ENCODE measurements at regions of chr1 and their contacts with region 1.

Region 1: GRCh38 chr1:185317034-185317885 is at the start of gene IVNS1ABP:
- DNase-seq: peak; percentile 90 to 99 (median 95)
- ATAC-seq: peak; percentile 74 to 81 (median 76)
- H3K4me3 ChIP-seq: peak within 1 kb of the TSS; percentile 95 to 99
- H3K4me3 Mint-ChIP-seq: peak within 1 kb of the TSS; percentile 95 to 96 (median 95)
- H3K27ac ChIP-seq: peak within 1 kb of the TSS; percentile 98
- H3K27ac Mint-ChIP-seq: peak within 1 kb of the TSS; percentile 98
- H3K4me1 ChIP-seq: peaks cover 8 to 28% of the 10 kb centered on the region in 2 experiments
- H3K4me1 Mint-ChIP-seq: peaks cover 48 to 55% (median 53%) of the 10 kb centered on the region in 3 donors
- H3K27me3 ChIP-seq: no peaks in the 10 kb centered on the region
- H3K27me3 Mint-ChIP-seq: no peaks in the 10 kb centered on the region
- total RNA-seq, gene IVNS1ABP: 125 to 292 (median 136) TPM

Region 2: DNA sequence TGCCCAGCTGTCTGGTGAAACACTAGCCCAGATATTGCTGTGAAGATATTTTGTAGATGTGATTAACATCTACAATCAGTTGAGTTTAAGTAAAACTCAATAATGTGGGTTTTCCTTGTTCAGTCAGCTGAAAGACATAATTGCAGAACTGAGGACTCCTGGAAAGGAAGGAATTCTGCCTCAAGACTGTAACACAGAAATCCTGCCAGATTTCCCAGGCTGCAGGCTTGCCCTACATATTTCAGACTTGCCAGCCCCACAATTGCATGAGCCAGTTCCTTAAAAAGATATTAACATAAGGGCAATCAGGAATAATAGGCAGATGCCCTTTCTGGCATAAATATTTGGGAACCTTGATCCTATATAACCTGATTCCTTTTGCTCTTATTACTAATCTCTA is 328.8 kb before region 1 on chr1:
- CTCF ChIA-PET with region 1: no interaction called
- POLR2A ChIA-PET with region 1: no interaction called
- DNase-seq: no peak
- ATAC-seq: no peak
- H3K4me3 ChIP-seq: no peak overlapping the region
- H3K4me3 Mint-ChIP-seq: no peak overlapping the region
- H3K27ac ChIP-seq: no peak overlapping the region
- H3K27ac Mint-ChIP-seq: no peak overlapping the region
- H3K4me1 ChIP-seq: no peaks in the 10 kb centered on the region
- H3K4me1 Mint-ChIP-seq: no peaks in the 10 kb centered on the region
- H3K27me3 ChIP-seq: no peaks in the 10 kb centered on the region
- H3K27me3 Mint-ChIP-seq: peaks cover 2 to 24% of the 10 kb centered on the region in 2 donors

Region 3: GRCh38 chr1:185238447-185238846 is 78.8 kb before region 1 on chr1:
- CTCF ChIA-PET with region 1: interaction called, 4 to 15 read pairs
- POLR2A ChIA-PET with region 1: interaction called, 3 to 8 read pairs
- DNase-seq: peak in 1 of 35 experiments; percentile 50
- ATAC-seq: peak in 3 of 4 experiments; percentile 42 to 71 (median 69)
- H3K4me3 ChIP-seq: no peak overlapping the region
- H3K4me3 Mint-ChIP-seq: peak overlapping the region in 2 of 3 donors; percentile 31 to 35
- H3K27ac ChIP-seq: no peak overlapping the region
- H3K27ac Mint-ChIP-seq: peak overlapping the region in 1 of 2 donors; percentile 5
- H3K4me1 ChIP-seq: peaks cover 0 to 14% of the 10 kb centered on the region in 2 experiments
- H3K4me1 Mint-ChIP-seq: peaks cover 30 to 38% (median 34%) of the 10 kb centered on the region in 3 donors
- H3K27me3 ChIP-seq: no peaks in the 10 kb centered on the region
- H3K27me3 Mint-ChIP-seq: no peaks in the 10 kb centered on the region

Region 4: DNA sequence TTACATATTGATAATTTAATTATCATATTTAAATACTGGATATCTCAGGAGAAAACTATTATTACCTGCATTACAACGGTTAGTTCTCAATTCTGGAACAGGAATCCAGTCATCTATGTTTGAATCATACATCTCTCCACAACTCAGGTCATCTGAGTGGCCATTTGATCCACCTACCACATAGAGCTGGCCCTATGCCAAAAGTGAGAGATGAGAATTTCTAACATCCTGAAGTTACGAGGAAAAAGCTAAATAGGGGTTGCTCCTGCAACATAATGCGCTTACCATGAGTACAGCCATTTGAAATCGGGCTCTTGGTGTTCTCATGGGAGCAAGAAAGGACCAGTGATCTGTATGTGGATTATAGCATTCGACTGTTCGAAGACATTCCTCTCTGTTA is 17.1 kb before region 1 on chr1:
- CTCF ChIA-PET with region 1: interaction called in 1 of 2 experiments, 4 read pairs
- POLR2A ChIA-PET with region 1: interaction called, 5 to 32 read pairs
- DNase-seq: no peak
- ATAC-seq: no peak
- H3K4me3 ChIP-seq: no peak overlapping the region
- H3K4me3 Mint-ChIP-seq: no peak overlapping the region
- H3K27ac ChIP-seq: no peak overlapping the region
- H3K27ac Mint-ChIP-seq: no peak overlapping the region
- H3K4me1 ChIP-seq: no peaks in the 10 kb centered on the region
- H3K4me1 Mint-ChIP-seq: peaks cover 3 to 13% (median 12%) of the 10 kb centered on the region in 3 donors
- H3K27me3 ChIP-seq: no peaks in the 10 kb centered on the region
- H3K27me3 Mint-ChIP-seq: no peaks in the 10 kb centered on the region

Region 5: GRCh38 chr1:185338719-185339622 is 21.7 kb after region 1 on chr1:
- CTCF ChIA-PET with region 1: interaction called in 1 of 2 experiments, 7 read pairs
- POLR2A ChIA-PET with region 1: interaction called in 1 of 2 experiments, 23 read pairs
- DNase-seq: peak in 34 of 35 experiments; percentile 6 to 66 (median 36)
- ATAC-seq: peak; percentile 90 to 96 (median 92)
- H3K4me3 ChIP-seq: no peak overlapping the region
- H3K4me3 Mint-ChIP-seq: peak overlapping the region in 2 of 3 donors; percentile 3 to 63
- H3K27ac ChIP-seq: peak overlapping the region; percentile 62
- H3K27ac Mint-ChIP-seq: peak overlapping the region; percentile 87 to 91
- H3K4me1 ChIP-seq: peaks cover 21 to 27% of the 10 kb centered on the region in 2 experiments
- H3K4me1 Mint-ChIP-seq: peaks cover 35 to 39% (median 39%) of the 10 kb centered on the region in 3 donors
- H3K27me3 ChIP-seq: no peaks in the 10 kb centered on the region
- H3K27me3 Mint-ChIP-seq: no peaks in the 10 kb centered on the region

Region 6: DNA sequence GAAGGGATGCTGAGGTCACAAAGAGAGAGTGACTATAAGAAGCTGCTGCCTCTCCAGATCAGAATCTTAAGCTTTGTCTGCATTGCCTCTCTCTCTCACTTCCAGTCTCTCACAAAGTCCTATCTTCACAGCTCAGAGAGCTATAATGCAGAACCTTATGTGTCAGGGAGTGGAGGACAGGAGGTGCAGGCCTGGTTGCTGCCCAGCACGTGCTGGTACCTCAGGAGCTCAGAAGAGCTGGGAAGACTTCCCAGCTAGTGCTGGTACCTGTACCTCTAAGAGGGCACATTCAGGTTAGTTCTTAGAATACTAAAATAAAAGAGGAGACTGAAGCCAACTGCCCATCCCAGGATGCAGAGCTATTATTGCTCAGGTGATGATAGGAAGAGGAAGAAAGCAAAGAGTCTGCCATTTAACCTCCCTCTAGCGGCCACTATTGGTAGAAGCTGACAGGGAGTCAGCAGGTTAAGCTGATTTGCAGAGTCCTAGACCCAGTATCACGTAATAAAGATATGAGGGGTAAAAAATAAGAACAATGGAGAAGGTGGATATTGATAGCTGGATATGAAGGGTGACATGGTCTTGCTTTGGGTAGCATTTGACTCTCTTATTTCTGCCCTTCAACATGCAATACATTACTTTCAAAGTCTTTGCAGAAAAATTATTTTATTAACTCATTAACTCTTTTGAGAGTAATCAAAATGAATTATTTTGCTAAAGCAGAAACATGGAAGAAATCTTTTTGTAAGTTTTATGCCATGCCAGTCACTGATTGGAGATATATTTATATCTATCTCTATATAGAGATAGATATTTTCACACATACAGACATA is 278.8 kb after region 1 on chr1:
- CTCF ChIA-PET with region 1: interaction called in 1 of 2 experiments, 39 read pairs
- POLR2A ChIA-PET with region 1: interaction called, 3 to 4 read pairs
- DNase-seq: peak in 34 of 35 experiments; percentile 7 to 74 (median 46)
- ATAC-seq: peak; percentile 63 to 82 (median 76)
- H3K4me3 ChIP-seq: no peak overlapping the region
- H3K4me3 Mint-ChIP-seq: no peak overlapping the region
- H3K27ac ChIP-seq: no peak overlapping the region
- H3K27ac Mint-ChIP-seq: peak overlapping the region; percentile 41 to 75
- H3K4me1 ChIP-seq: peaks cover 9 to 10% of the 10 kb centered on the region in 2 experiments
- H3K4me1 Mint-ChIP-seq: peaks cover 26 to 37% (median 26%) of the 10 kb centered on the region in 3 donors
- H3K27me3 ChIP-seq: no peaks in the 10 kb centered on the region
- H3K27me3 Mint-ChIP-seq: no peaks in the 10 kb centered on the region

Region 7: GRCh38 chr1:185681034-185681633 is 363.9 kb after region 1 on chr1:
- CTCF ChIA-PET with region 1: interaction called, 3 to 14 read pairs
- POLR2A ChIA-PET with region 1: interaction called, 4 read pairs
- DNase-seq: peak in 3 of 35 experiments; percentile 8 to 69 (median 9)
- ATAC-seq: peak; percentile 41 to 64 (median 52)
- H3K4me3 ChIP-seq: no peak overlapping the region
- H3K4me3 Mint-ChIP-seq: no peak overlapping the region
- H3K27ac ChIP-seq: no peak overlapping the region
- H3K27ac Mint-ChIP-seq: no peak overlapping the region
- H3K4me1 ChIP-seq: peaks cover 7 to 18% of the 10 kb centered on the region in 2 experiments
- H3K4me1 Mint-ChIP-seq: peaks cover 25 to 36% (median 34%) of the 10 kb centered on the region in 3 donors
- H3K27me3 ChIP-seq: no peaks in the 10 kb centered on the region
- H3K27me3 Mint-ChIP-seq: peaks cover 0 to 4% of the 10 kb centered on the region in 2 donors

Measured in T-cell (primary cell).